ENCODE measurements at regions of chr17 and their contacts with region 1.

Region 1: GRCh38 chr17:78970834-78971773 is 8.6 kb downstream of the LGALS3BP start:
- DNase-seq: peak; percentile 82 to 88
- H3K4me3 ChIP-seq: no peak overlapping the region
- H3K27ac ChIP-seq: peak overlapping the region; percentile 60 to 61
- H3K4me1 ChIP-seq: peaks cover 0 to 4% of the 10 kb centered on the region in 2 donors
- H3K27me3 ChIP-seq: no peaks in the 10 kb centered on the region
- CTCF ChIP-seq: peak; percentile 86 to 94 (median 89)
- POLR2A ChIP-seq: no peak

Region 2: GRCh38 chr17:78716814-78717393 is 254.2 kb before region 1 on chr17:
- intact Hi-C with region 1: loop called (anchors 10 kb)
- DNase-seq: peak; percentile 56 to 64
- H3K4me3 ChIP-seq: peak overlapping the region; percentile 28 to 39
- H3K27ac ChIP-seq: peak overlapping the region in 1 of 2 donors; percentile 65
- H3K4me1 ChIP-seq: peaks cover 9 to 19% of the 10 kb centered on the region in 2 donors
- H3K27me3 ChIP-seq: no peaks in the 10 kb centered on the region
- CTCF ChIP-seq: no peak
- POLR2A ChIP-seq: no peak

Region 3: DNA sequence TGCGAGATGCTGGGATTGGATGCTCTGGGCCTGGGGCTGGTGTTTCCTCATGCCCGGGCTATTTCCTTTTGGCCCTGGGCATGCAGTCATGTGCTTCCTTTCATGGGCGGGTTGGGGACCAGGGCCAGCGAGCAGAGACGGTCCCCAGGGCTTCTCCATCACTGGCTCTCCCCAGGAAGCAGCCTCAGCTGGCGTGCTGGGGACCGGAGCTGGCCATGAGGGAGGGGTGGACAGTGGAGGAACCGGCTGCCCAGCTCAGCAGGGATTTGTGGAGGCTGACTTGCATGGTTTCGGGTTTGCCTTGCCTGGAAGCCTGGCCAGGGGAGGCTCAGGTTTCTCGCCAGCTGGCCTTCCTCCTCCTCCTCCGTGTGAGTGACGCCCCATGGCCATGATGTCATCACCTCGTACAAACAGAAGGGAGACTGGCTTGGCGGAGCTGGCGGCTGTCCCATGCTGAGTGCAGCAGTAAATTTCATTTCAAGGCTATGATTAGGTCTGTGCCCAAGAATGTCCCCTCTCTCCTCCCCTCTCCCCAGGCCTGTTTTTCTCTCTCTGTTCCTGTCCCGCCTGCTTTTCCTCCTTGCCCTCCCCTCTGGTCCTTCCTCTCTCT is 37.0 kb before region 1 on chr17:
- intact Hi-C with region 1: no loop called
- DNase-seq: peak; percentile 99
- H3K4me3 ChIP-seq: peak overlapping the region in 1 of 2 donors; percentile 2
- H3K27ac ChIP-seq: peak overlapping the region; percentile 95 to 99
- H3K4me1 ChIP-seq: peaks cover 17 to 19% of the 10 kb centered on the region in 2 donors
- H3K27me3 ChIP-seq: no peaks in the 10 kb centered on the region
- CTCF ChIP-seq: no peak
- POLR2A ChIP-seq: peak; percentile 55